ENCODE measurements at regions of chr22 and their contacts with region 1.

Region 1: DNA sequence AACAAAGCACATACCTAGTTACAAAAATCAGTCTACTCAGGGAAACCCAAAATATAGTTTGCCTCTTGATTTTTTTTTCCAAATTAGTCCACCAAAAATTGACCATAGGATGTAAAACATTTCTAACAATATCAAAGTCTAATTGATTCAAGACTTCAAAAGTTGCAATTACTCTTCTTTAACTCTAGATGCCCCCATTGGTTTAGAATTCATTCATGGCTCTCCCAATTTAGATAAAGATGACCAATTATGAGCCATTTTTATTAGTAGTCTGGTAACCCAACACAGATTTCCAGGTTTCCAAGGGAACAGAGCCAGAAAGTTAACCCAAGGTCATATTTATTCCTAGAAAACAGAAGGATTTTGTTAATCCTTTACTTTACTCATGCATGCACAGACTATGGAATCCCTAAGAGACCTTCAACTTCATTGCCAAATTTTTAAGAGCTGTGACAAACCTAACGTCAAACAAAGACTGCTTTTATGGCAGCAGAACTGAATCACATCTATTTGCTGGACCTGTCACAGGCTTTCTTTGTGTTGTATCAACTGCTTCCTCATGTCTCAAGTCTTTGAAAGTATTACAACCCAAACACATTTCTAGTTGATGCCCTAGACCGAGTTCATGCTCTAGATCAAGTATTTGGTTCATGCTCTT is 55.3 kb downstream of the C22orf42 start:
- ATAC-seq: no peak
- H3K4me3 ChIP-seq: no peak overlapping the region
- H3K27ac ChIP-seq: no peak overlapping the region
- H3K4me1 ChIP-seq: no peaks in the 10 kb centered on the region

Region 2: DNA sequence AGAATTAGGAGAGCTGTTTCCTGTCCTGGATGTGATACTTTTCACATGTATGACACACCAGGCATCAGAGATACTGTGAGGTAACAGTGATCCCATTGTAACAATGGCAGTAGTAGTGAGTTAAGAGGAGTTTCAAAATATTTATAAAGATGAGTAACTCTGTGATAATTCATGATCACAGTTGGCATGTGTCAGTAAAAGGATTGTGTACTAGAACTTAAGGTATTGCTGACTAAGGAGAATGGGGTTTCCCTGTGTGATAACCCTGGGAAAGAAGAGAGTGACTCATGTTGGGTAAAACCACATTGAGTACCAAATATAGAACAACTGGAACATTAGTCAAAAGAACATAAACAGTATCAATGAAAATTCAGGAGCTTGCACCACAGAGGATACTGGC is 83.7 kb before region 1 on chr22:
- in situ Hi-C with region 1: loop called in 1 of 9 experiments (anchors 25 kb)
- ATAC-seq: peak in 2 of 8 experiments; percentile 50 to 94
- H3K4me3 ChIP-seq: no peak overlapping the region
- H3K27ac ChIP-seq: no peak overlapping the region
- H3K4me1 ChIP-seq: no peaks in the 10 kb centered on the region

Region 3: DNA sequence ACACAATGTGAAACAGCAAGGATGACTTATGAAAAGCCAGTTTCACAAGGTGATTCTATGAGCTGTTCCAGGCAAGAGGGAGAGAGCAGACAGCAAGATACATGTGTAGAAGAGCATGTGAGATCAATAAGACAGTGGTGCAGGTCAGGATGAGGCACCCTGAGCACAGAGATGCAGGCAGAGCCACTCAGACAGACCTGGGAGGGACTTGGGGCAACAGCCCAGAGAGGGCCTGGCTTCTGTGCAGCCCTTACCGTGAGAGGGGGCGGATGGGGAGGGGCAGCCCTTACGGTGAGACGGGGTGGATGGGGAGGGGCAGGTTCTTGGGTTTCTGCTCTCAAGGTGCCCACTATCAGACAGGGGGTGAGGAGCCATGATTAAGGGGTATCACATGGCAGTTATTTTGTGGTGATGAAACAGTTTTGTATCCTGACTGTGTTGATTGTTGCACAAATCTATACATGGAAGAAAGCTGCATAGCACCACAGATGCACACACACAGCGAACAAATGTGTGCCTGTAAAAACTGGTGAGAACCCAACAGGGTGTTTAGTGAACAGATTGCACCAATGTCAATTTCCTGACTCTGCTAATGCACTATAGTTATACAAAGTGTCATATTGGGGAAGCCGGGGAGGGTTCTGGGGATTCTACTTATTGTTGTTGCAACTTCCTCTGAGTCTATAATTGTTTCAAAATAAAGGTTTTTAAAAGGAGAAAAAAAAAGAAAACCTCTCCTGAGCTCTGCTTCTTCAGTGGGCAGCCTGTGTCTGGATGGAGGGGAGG is 60.5 kb after region 1 on chr22:
- in situ Hi-C with region 1: no loop called
- ATAC-seq: peak in 5 of 8 experiments; percentile 74 to 90 (median 81)
- H3K4me3 ChIP-seq: no peak overlapping the region
- H3K27ac ChIP-seq: no peak overlapping the region
- H3K4me1 ChIP-seq: peaks cover 0 to 2% of the 10 kb centered on the region in 2 donors

Region 4: DNA sequence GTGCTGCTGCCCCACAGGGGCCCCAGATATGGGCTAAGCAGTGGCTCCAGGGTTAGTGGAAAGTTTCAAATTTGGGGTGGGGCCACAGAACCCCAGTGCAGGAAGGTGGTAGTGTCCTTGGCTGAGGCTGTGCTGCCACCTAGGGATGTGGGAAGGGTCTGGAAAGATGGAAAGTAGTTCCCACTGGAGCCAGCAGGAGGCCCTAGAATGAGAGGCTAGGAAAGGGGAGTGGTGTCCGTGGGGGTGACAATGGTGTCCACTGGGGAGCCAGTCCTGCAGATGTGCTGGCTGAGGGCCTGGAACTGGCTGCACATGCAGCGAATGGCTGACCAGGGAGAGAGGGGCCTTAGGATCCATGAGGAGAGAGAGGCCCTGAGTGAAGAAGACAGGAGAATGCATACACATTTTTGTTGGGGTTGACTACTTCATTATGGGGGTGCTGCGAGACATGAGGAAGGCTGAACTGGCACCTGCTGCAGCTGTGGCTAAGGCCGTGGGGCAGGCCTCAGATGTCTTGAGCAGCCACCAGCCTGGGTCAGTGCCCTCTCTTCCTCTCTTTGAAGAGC is 275.0 kb after region 1 on chr22:
- in situ Hi-C with region 1: loop called in 1 of 9 experiments (anchors 25 kb)
- ATAC-seq: peak in 6 of 8 experiments; percentile 46 to 93 (median 84)
- H3K4me3 ChIP-seq: no peak overlapping the region
- H3K27ac ChIP-seq: no peak overlapping the region
- H3K4me1 ChIP-seq: peaks cover 4 to 6% of the 10 kb centered on the region in 2 donors

Measured in motor neuron (in vitro differentiated cells).